IMR-90 (cell line): ENCODE measurements at regions of chr19 and their contacts with region 1.

Region 1: GRCh38 chr19:17865364-17866311 is 5.9 kb downstream of the RPL18A start:
- DNase-seq: no peak
- ATAC-seq: peak; percentile 12
- H3K4me3 ChIP-seq: no peak overlapping the region
- H3K27ac ChIP-seq: no peak overlapping the region
- H3K4me1 ChIP-seq: peaks cover 7% of the 10 kb centered on the region
- H3K27me3 ChIP-seq: peaks cover 18% of the 10 kb centered on the region
- CTCF ChIP-seq: no peak
- POLR2A ChIP-seq: peak; percentile 46; the same call in 1 of the 2 replicates
- RAD21 ChIP-seq: no peak

Region 2: DNA sequence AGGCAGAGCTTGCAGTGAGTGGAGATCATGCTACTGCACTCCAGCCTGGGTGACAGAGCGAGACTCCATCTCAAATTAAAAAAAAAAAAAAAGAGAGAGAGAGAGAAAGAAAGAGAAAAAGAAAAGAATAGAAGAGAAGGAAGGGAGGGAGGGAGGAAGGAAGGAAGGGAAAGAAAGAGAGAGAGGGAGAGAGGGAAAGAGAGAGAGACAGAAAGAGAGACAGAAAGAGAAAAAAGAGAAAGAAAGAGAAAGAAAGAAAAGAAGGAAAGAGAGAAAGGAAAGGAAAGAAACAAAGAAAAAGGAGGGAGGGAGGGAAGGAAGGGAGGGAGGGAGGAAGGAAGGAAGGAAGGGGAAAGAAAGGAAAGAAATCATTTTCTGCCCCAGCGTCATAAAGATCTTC is 170.4 kb before region 1 on chr19:
- CTCF ChIA-PET with region 1: no interaction called
- POLR2A ChIA-PET with region 1: no interaction called
- dilution Hi-C with region 1: no loop called
- in situ Hi-C with region 1: no loop called
- intact Hi-C with region 1: no loop called
- DNase-seq: no peak
- ATAC-seq: no peak
- H3K4me3 ChIP-seq: no peak overlapping the region
- H3K27ac ChIP-seq: no peak overlapping the region
- H3K4me1 ChIP-seq: no peaks in the 10 kb centered on the region
- H3K27me3 ChIP-seq: peaks cover 23% of the 10 kb centered on the region
- CTCF ChIP-seq: no peak
- POLR2A ChIP-seq: no peak
- RAD21 ChIP-seq: no peak

Region 3: GRCh38 chr19:17947815-17948513 is 82.3 kb after region 1 on chr19:
- CTCF ChIA-PET with region 1: no interaction called
- POLR2A ChIA-PET with region 1: interaction called, 15 read pairs
- dilution Hi-C with region 1: no loop called
- in situ Hi-C with region 1: no loop called
- intact Hi-C with region 1: no loop called
- DNase-seq: peak; percentile 87
- ATAC-seq: peak; percentile 87
- H3K4me3 ChIP-seq: peak overlapping the region; percentile 56
- H3K27ac ChIP-seq: no peak overlapping the region; the same call in 1 of the 2 replicates
- H3K4me1 ChIP-seq: peaks cover 5% of the 10 kb centered on the region
- H3K27me3 ChIP-seq: peaks cover 44% of the 10 kb centered on the region
- CTCF ChIP-seq: no peak
- POLR2A ChIP-seq: no peak
- RAD21 ChIP-seq: no peak

Region 4: DNA sequence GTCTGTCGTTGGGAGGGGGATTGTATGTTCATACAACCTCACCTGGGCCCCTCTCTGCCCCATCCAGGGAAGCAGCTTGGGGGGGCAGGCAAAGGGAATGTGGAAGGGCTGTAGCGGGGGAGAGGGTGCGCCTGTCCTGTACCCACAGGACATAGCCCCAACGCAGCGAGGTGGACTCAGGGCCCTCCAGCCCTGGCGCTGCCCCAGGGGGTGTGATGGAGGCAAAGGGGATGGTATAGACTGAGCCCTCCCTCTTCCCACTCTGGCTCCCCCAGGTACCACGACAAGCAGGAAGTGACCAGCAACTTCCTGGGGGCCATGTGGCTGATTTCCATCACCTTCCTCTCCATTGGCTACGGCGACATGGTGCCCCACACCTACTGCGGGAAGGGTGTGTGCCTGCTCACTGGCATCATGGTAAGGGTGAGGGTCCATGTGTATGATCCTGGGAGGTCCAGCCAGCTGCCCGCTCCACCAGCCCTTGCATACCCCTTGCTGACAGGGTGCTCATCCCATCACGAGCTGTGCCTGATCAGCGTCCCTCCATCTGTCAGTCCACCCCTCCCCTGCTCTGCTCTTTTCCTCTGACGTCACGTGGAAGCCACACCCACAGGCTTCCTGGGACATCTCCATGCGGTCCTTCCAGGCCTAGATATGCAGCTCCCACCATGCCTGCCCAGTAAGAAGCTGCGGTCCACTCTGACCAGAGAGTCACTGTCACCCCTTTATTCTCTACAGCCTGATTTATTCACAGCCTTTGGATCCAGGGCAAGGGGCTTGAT is 119.6 kb after region 1 on chr19:
- CTCF ChIA-PET with region 1: no interaction called
- POLR2A ChIA-PET with region 1: no interaction called
- dilution Hi-C with region 1: no loop called
- in situ Hi-C with region 1: loop called (anchors 5 kb)
- intact Hi-C with region 1: no loop called
- DNase-seq: no peak
- ATAC-seq: no peak
- H3K4me3 ChIP-seq: no peak overlapping the region
- H3K27ac ChIP-seq: no peak overlapping the region
- H3K4me1 ChIP-seq: no peaks in the 10 kb centered on the region
- H3K27me3 ChIP-seq: peaks cover 3% of the 10 kb centered on the region; the same call in 1 of the 2 replicates
- CTCF ChIP-seq: no peak
- POLR2A ChIP-seq: no peak
- RAD21 ChIP-seq: no peak